HepG2 (cell line): ENCODE measurements at regions of chr12 and their contacts with region 1.

Region 1: GRCh38 chr12:6764011-6764828 is 1.9 kb upstream of the PTMS start:
- DNase-seq: peak; percentile 95
- ATAC-seq: peak; percentile 82
- H3K4me3 ChIP-seq: peak overlapping the region; percentile 41 to 72 (median 51)
- H3K27ac ChIP-seq: peak overlapping the region; percentile 54
- H3K4me1 ChIP-seq: peaks cover 77% of the 10 kb centered on the region
- H3K27me3 ChIP-seq: no peaks in the 10 kb centered on the region
- CTCF ChIP-seq: no peak
- EP300 ChIP-seq: peak in 1 of 2 experiments; percentile 82; a peak in 2 of 4 replicates
- POLR2A ChIP-seq: no peak
- RAD21 ChIP-seq: no peak

Region 2: DNA sequence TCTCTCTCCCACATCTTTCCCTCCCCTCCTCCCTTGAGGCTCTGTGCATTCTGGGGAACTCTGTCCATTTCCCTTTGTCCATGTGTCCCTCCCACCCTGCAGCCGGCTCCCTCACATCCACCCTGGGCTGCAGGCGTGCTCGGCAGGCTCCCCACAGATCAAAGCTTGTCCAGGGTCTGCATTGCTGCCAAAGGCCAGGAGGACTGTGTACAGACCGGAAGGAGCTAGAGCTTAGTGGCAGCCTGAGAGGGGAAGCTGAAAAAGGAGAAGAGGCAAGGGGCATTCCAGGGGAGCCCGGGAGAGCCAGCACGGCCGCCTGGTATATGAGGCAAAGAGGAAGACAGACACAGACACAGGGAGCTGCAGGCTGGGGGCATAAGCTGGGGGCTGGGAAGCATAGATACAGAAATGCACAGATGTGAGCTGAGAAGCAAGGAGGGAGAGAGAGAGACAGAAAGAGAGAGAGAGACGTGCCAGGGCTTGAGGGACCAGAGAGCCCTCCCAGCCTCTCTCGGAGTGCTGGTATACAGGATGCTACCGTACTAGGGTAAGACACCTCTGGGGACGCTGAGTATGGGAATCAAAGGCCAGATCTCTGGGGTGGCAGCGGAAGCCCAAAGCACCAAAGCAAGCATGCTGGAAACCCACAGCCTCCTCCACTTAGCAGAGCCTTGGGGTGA is 28.4 kb after region 1 on chr12:
- CTCF ChIA-PET with region 1: no interaction called
- POLR2A ChIA-PET with region 1: interaction called, 19 read pairs
- in situ Hi-C with region 1: no loop called
- intact Hi-C with region 1: no loop called
- DNase-seq: peak; percentile 87
- ATAC-seq: peak; percentile 97
- H3K4me3 ChIP-seq: peak overlapping the region in 2 of 3 experiments; percentile 27 to 58; a peak in 4 of 6 replicates
- H3K27ac ChIP-seq: peak overlapping the region; percentile 74
- H3K4me1 ChIP-seq: peaks cover 59% of the 10 kb centered on the region
- H3K27me3 ChIP-seq: no peaks in the 10 kb centered on the region; a peak in 1 of 5 replicates
- CTCF ChIP-seq: peak; percentile 31; the same call in 1 of the 2 replicates
- EP300 ChIP-seq: peak in 1 of 2 experiments; percentile 78; a peak in 2 of 4 replicates
- POLR2A ChIP-seq: peak in 1 of 2 experiments; percentile 59; a peak in 2 of 4 replicates
- RAD21 ChIP-seq: no peak